ENCODE measurements at regions of chr5 and their contacts with region 1.

Region 1: DNA sequence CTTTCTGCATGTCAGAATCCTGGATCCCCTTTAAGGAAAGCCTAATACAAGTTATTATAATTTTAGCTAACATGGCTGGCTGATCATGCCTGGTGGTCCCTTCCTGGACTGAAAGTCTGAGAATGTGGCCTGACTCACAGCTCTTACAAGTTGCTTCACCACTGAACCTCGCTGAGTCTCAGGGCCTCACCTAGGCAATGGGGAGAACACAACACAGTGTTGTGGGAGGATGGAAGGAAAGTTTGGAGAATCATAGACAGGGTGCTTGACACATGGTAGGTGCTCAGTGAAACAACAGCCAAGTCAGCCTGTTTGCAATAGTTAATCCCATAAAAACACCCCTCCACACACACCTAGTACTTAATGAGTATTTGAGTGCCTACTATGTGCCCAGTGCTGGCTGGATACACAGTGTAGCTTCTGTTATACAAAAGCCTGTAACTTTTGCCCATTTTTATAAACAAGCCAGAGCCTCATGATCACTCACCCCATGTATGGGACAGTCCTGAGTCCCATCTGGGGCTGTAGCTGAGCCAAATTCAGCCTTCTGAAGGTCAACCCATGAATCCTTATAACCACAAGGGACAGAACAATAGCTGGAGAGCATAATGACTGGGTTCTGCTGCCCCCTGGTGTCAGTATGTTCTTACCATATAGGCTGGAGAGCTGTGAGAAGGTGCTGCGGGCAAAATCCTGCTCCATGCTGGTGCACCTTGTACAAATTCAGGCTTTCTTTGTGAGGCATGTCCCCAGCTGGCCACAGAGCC is 3.9 kb downstream of the ACSL6 start:
- DNase-seq: peak; percentile 75
- H3K4me3 ChIP-seq: no peak overlapping the region; a peak in 1 of 4 replicates
- H3K27ac ChIP-seq: no peak overlapping the region
- H3K4me1 ChIP-seq: peaks cover 0 to 9% of the 10 kb centered on the region in 2 experiments; a peak in 1 of 4 replicates
- H3K27me3 ChIP-seq: no peaks in the 10 kb centered on the region
- CTCF ChIP-seq: peak; percentile 72
- EP300 ChIP-seq: no peak
- RAD21 ChIP-seq: peak; percentile 92

Region 2: GRCh38 chr5:131810510-131811249 is 196.9 kb before region 1 on chr5:
- CTCF ChIA-PET with region 1: interaction called, 63 read pairs
- POLR2A ChIA-PET with region 1: no interaction called
- DNase-seq: peak; percentile 37
- H3K4me3 ChIP-seq: no peak overlapping the region; a peak in 1 of 4 replicates
- H3K27ac ChIP-seq: no peak overlapping the region
- H3K4me1 ChIP-seq: no peaks in the 10 kb centered on the region; a peak in 1 of 4 replicates
- H3K27me3 ChIP-seq: no peaks in the 10 kb centered on the region
- CTCF ChIP-seq: peak; percentile 43
- EP300 ChIP-seq: no peak
- RAD21 ChIP-seq: peak; percentile 73

Measured in SK-N-SH (cell line).